CD8-positive, alpha-beta T cell (primary cell): ENCODE measurements at regions of chr14 and their contacts with region 1.

Region 1: GRCh38 chr14:77301103-77301502 is 19.6 kb downstream of the POMT2 start:
- DNase-seq: peak in 8 of 9 experiments; percentile 27 to 62 (median 53)
- ATAC-seq: no peak
- H3K4me3 ChIP-seq: no peak overlapping the region
- H3K4me3 Mint-ChIP-seq: no peak overlapping the region
- H3K27ac ChIP-seq: no peak overlapping the region
- H3K27ac Mint-ChIP-seq: no peak overlapping the region
- H3K4me1 ChIP-seq: no peaks in the 10 kb centered on the region
- H3K4me1 Mint-ChIP-seq: no peaks in the 10 kb centered on the region
- H3K27me3 ChIP-seq: no peaks in the 10 kb centered on the region
- H3K27me3 Mint-ChIP-seq: no peaks in the 10 kb centered on the region
- CTCF ChIP-seq: peak; percentile 46

Region 2: GRCh38 chr14:77208291-77208969 is 92.7 kb before region 1 on chr14:
- CTCF ChIA-PET with region 1: no interaction called
- POLR2A ChIA-PET with region 1: no interaction called
- intact Hi-C with region 1: no loop called
- DNase-seq: peak in 8 of 9 experiments; percentile 4 to 75 (median 54)
- ATAC-seq: no peak
- H3K4me3 ChIP-seq: no peak overlapping the region
- H3K4me3 Mint-ChIP-seq: no peak overlapping the region
- H3K27ac ChIP-seq: no peak overlapping the region
- H3K27ac Mint-ChIP-seq: no peak overlapping the region
- H3K4me1 ChIP-seq: no peaks in the 10 kb centered on the region
- H3K4me1 Mint-ChIP-seq: no peaks in the 10 kb centered on the region
- H3K27me3 ChIP-seq: no peaks in the 10 kb centered on the region
- H3K27me3 Mint-ChIP-seq: peaks cover 13% of the 10 kb centered on the region
- CTCF ChIP-seq: no peak

Region 3: DNA sequence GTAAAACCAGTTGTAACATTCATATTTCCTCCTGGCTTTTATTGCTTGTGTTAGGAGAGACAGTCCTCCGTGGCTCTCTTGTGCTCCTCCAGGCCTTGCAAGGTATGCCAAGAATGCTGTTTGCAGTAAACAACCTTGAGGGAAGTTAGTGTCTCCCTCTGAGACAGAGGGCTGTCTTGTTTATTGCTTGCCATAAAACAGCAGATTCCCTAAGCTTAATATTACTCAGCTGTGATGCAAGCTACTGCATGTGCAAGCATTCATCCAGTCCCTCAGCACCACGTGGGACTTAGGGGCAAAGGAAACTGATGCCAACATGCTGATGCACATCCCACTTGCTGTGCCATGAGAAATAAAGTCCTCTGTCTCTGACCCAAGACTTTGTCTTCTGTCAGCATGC is 12.9 kb after region 1 on chr14:
- CTCF ChIA-PET with region 1: interaction called, 63 read pairs
- POLR2A ChIA-PET with region 1: interaction called, 4 read pairs
- intact Hi-C with region 1: loop called in 1 of 2 experiments (anchors 1 kb)
- DNase-seq: no peak
- ATAC-seq: no peak
- H3K4me3 ChIP-seq: no peak overlapping the region
- H3K4me3 Mint-ChIP-seq: no peak overlapping the region
- H3K27ac ChIP-seq: no peak overlapping the region
- H3K27ac Mint-ChIP-seq: no peak overlapping the region
- H3K4me1 ChIP-seq: no peaks in the 10 kb centered on the region
- H3K4me1 Mint-ChIP-seq: peaks cover 6% of the 10 kb centered on the region
- H3K27me3 ChIP-seq: no peaks in the 10 kb centered on the region
- H3K27me3 Mint-ChIP-seq: no peaks in the 10 kb centered on the region
- CTCF ChIP-seq: no peak

Region 4: DNA sequence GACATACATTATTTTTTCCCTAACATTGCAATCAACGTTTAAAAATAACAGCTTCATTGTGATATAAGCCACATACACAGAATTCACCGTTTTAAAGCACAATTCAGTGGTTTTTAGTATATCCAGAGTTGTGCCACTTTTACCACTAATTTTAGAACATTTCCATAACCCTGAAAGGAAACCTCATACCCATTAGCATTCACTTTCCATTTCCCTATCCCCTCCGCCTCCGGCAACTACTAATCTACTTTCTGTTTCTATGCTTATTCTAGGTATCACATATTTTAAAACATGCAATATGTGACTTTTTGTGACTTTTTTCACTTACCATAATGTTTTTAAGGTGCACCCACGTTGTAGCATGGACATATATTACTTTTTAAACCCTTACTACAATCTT is 253.1 kb after region 1 on chr14:
- CTCF ChIA-PET with region 1: no interaction called
- POLR2A ChIA-PET with region 1: no interaction called
- intact Hi-C with region 1: loop called in 1 of 2 experiments (anchors 2 kb)
- DNase-seq: peak in 1 of 9 experiments; percentile 14
- ATAC-seq: no peak
- H3K4me3 ChIP-seq: no peak overlapping the region
- H3K4me3 Mint-ChIP-seq: no peak overlapping the region
- H3K27ac ChIP-seq: peak overlapping the region in 1 of 2 experiments; percentile 2
- H3K27ac Mint-ChIP-seq: peak overlapping the region; percentile 43
- H3K4me1 ChIP-seq: no peaks in the 10 kb centered on the region
- H3K4me1 Mint-ChIP-seq: peaks cover 2% of the 10 kb centered on the region
- H3K27me3 ChIP-seq: no peaks in the 10 kb centered on the region
- H3K27me3 Mint-ChIP-seq: no peaks in the 10 kb centered on the region
- CTCF ChIP-seq: no peak

Region 5: DNA sequence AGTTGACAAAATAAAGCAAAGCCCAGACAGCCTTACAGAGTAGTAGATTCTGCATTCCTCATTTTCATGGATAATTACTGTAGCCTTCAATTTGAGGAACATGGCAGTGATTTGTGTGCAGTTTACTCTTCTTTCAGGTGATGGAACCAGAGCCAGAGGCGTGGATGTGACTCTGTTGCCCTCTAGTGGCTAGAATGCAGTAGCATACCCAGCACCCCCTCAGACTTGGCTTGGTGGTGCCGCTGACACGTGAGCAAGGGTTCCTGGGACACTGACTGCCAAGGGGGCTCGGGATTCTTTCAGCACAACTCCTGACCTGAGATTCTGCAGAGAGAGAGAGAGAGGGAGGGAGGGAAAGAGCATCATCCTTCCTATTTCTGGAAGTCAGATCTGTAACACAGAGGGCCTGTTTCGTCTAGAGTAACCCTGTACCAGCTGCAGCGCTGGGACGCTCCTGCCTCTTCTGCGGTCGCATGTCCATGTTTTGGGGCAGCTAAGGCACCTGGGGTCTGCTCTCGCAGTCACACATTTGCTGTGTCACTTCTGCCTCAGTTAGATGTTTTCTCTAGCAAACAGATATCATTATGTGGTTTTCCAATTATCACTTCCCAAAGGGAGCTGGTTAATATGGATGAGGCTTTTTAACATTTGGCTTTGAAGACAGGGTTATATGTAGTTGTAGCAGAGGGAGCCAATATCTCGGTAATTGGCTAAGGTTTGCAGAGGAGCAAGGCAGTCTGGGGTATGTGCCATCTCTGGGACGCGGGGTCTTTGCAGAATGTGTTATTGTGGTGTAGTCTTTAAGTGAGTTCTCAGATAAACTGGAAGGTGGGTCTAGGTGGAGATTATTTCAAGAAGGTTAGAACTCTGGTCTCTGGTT is 1297.2 kb after region 1 on chr14:
- CTCF ChIA-PET with region 1: no interaction called
- POLR2A ChIA-PET with region 1: no interaction called
- intact Hi-C with region 1: loop called in 1 of 2 experiments (anchors 5 kb)
- DNase-seq: peak in 8 of 9 experiments; percentile 1 to 52 (median 25)
- ATAC-seq: no peak
- H3K4me3 ChIP-seq: no peak overlapping the region
- H3K4me3 Mint-ChIP-seq: no peak overlapping the region
- H3K27ac ChIP-seq: no peak overlapping the region
- H3K27ac Mint-ChIP-seq: no peak overlapping the region
- H3K4me1 ChIP-seq: no peaks in the 10 kb centered on the region
- H3K4me1 Mint-ChIP-seq: no peaks in the 10 kb centered on the region
- H3K27me3 ChIP-seq: no peaks in the 10 kb centered on the region
- H3K27me3 Mint-ChIP-seq: peaks cover 1% of the 10 kb centered on the region
- CTCF ChIP-seq: peak; percentile 55